Activated CD4-positive, alpha-beta memory T cell treated with anti-CD3 and anti-CD28 coated beads for 36 hours (primary cell): ENCODE measurements at regions of chr6 and their contacts with region 1.

Region 1: DNA sequence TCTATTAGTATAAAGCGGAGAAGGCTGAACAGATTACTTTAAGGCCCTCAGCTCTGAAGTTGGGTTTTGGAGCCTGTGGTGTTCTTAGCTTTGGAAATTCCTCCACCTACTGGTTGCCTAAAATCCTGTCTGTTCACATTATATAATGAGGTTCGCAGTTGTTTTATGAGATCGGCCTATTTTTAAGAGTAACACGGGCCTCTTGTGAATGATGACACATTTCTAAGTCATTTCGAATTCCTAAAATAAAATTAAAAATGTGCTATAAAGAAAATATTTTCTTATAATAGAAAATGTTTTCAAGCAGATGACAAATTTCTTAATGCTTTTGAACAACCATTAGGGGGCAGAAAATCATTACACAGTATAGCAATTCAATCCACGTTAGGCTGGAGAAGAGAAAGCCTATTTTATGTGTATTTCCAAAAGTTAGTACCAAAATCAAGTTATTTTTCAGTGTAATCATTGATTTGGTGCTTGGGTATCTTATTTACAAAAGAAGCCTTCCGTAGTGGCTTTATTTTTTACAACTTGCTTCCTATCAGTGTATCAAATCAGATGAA is 15.8 kb upstream of the FAM8A1 start:
- DNase-seq: no peak
- H3K4me3 Mint-ChIP-seq: no peak overlapping the region
- H3K27ac Mint-ChIP-seq: no peak overlapping the region
- H3K4me1 Mint-ChIP-seq: peaks cover 7% of the 10 kb centered on the region
- H3K27me3 Mint-ChIP-seq: peaks cover 5% of the 10 kb centered on the region

Region 2: DNA sequence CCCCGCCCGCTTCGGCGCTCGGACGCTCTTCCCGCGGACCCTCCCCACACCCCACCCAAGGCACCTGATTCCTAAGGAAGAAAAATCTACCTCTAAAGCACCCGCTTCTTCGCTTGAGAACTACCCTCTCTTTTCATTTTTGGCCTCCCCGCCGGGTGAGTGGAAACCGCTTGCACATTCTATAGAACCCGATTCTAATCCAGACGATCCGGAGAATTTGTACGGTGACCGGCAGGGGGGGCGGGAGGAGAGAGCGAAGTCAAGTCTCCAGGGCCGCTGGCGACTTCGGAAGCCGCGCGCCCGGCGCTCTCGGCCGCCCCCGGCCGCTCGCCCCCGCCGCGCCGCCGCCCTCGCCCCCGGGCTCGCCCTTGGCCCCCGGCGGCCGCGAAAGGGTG is 303.2 kb before region 1 on chr6 and contains the start of gene RBM24:
- CTCF ChIA-PET with region 1: interaction called, 3 read pairs
- POLR2A ChIA-PET with region 1: no interaction called
- intact Hi-C with region 1: loop called (anchors 5 kb)
- DNase-seq: peak; percentile 57
- H3K4me3 Mint-ChIP-seq: peak within 1 kb of the TSS; percentile 60
- H3K27ac Mint-ChIP-seq: no peak within 1 kb of the TSS
- H3K4me1 Mint-ChIP-seq: peaks cover 12% of the 10 kb centered on the region
- H3K27me3 Mint-ChIP-seq: peaks cover 62% of the 10 kb centered on the region
- total RNA-seq, gene RBM24: not detected

Region 3: GRCh38 chr6:17446713-17447112 is 137.6 kb before region 1 on chr6:
- CTCF ChIA-PET with region 1: no interaction called
- POLR2A ChIA-PET with region 1: no interaction called
- intact Hi-C with region 1: no loop called
- DNase-seq: no peak
- H3K4me3 Mint-ChIP-seq: no peak overlapping the region
- H3K27ac Mint-ChIP-seq: no peak overlapping the region
- H3K4me1 Mint-ChIP-seq: no peaks in the 10 kb centered on the region
- H3K27me3 Mint-ChIP-seq: peaks cover 4% of the 10 kb centered on the region

Region 4: GRCh38 chr6:17803409-17803808 is 219.1 kb after region 1 on chr6:
- CTCF ChIA-PET with region 1: interaction called, 19 read pairs
- POLR2A ChIA-PET with region 1: no interaction called
- intact Hi-C with region 1: loop called (anchors 1 kb)
- DNase-seq: no peak
- H3K4me3 Mint-ChIP-seq: no peak overlapping the region
- H3K27ac Mint-ChIP-seq: no peak overlapping the region
- H3K4me1 Mint-ChIP-seq: no peaks in the 10 kb centered on the region
- H3K27me3 Mint-ChIP-seq: peaks cover 8% of the 10 kb centered on the region

Region 5: GRCh38 chr6:17820055-17820454 is 235.7 kb after region 1 on chr6:
- CTCF ChIA-PET with region 1: interaction called, 18 read pairs
- POLR2A ChIA-PET with region 1: no interaction called
- intact Hi-C with region 1: loop called (anchors 1 kb)
- DNase-seq: no peak
- H3K4me3 Mint-ChIP-seq: no peak overlapping the region
- H3K27ac Mint-ChIP-seq: no peak overlapping the region
- H3K4me1 Mint-ChIP-seq: no peaks in the 10 kb centered on the region
- H3K27me3 Mint-ChIP-seq: peaks cover 2% of the 10 kb centered on the region

Region 6: GRCh38 chr6:18343741-18344140 is 759.4 kb after region 1 on chr6:
- CTCF ChIA-PET with region 1: no interaction called
- POLR2A ChIA-PET with region 1: no interaction called
- intact Hi-C with region 1: no loop called
- DNase-seq: peak; percentile 44
- H3K4me3 Mint-ChIP-seq: no peak overlapping the region
- H3K27ac Mint-ChIP-seq: peak overlapping the region; percentile 54
- H3K4me1 Mint-ChIP-seq: peaks cover 9% of the 10 kb centered on the region
- H3K27me3 Mint-ChIP-seq: peaks cover 6% of the 10 kb centered on the region